ENCODE measurements at regions of chr1 and their contacts with region 1.

Region 1: GRCh38 chr1:156226116-156226538 is 13.3 kb downstream of the PMF1 start:
- DNase-seq: no peak
- ATAC-seq: no peak
- H3K4me3 Mint-ChIP-seq: no peak overlapping the region
- H3K27ac Mint-ChIP-seq: peak overlapping the region; percentile 85
- H3K4me1 Mint-ChIP-seq: peaks cover 47% of the 10 kb centered on the region
- H3K27me3 Mint-ChIP-seq: no peaks in the 10 kb centered on the region

Region 2: GRCh38 chr1:156096640-156097391 is 129.3 kb before region 1 on chr1:
- CTCF ChIA-PET with region 1: interaction called, 40 read pairs
- POLR2A ChIA-PET with region 1: interaction called, 30 read pairs
- intact Hi-C with region 1: loop called (anchors 1 to 2 kb)
- DNase-seq: peak; percentile 96
- ATAC-seq: peak; percentile 76
- H3K4me3 Mint-ChIP-seq: peak overlapping the region; percentile 60
- H3K27ac Mint-ChIP-seq: peak overlapping the region; percentile 94
- H3K4me1 Mint-ChIP-seq: peaks cover 58% of the 10 kb centered on the region
- H3K27me3 Mint-ChIP-seq: peaks cover 7% of the 10 kb centered on the region

Region 3: GRCh38 chr1:156129706-156130581 is 96.2 kb before region 1 on chr1:
- CTCF ChIA-PET with region 1: interaction called, 47 read pairs
- POLR2A ChIA-PET with region 1: interaction called, 3 read pairs
- intact Hi-C with region 1: loop called in 1 of 2 experiments (anchors 1 kb)
- DNase-seq: peak; percentile 89
- ATAC-seq: peak; percentile 27
- H3K4me3 Mint-ChIP-seq: no peak overlapping the region
- H3K27ac Mint-ChIP-seq: peak overlapping the region; percentile 49
- H3K4me1 Mint-ChIP-seq: peaks cover 54% of the 10 kb centered on the region
- H3K27me3 Mint-ChIP-seq: no peaks in the 10 kb centered on the region

Region 4: GRCh38 chr1:156146020-156146768 is 79.9 kb before region 1 on chr1:
- CTCF ChIA-PET with region 1: interaction called, 229 read pairs
- POLR2A ChIA-PET with region 1: interaction called, 6 read pairs
- intact Hi-C with region 1: loop called (anchors 1 kb)
- DNase-seq: peak; percentile 67
- ATAC-seq: peak; percentile 82
- H3K4me3 Mint-ChIP-seq: peak overlapping the region; percentile 37
- H3K27ac Mint-ChIP-seq: peak overlapping the region; percentile 85
- H3K4me1 Mint-ChIP-seq: peaks cover 46% of the 10 kb centered on the region
- H3K27me3 Mint-ChIP-seq: no peaks in the 10 kb centered on the region

Region 5: DNA sequence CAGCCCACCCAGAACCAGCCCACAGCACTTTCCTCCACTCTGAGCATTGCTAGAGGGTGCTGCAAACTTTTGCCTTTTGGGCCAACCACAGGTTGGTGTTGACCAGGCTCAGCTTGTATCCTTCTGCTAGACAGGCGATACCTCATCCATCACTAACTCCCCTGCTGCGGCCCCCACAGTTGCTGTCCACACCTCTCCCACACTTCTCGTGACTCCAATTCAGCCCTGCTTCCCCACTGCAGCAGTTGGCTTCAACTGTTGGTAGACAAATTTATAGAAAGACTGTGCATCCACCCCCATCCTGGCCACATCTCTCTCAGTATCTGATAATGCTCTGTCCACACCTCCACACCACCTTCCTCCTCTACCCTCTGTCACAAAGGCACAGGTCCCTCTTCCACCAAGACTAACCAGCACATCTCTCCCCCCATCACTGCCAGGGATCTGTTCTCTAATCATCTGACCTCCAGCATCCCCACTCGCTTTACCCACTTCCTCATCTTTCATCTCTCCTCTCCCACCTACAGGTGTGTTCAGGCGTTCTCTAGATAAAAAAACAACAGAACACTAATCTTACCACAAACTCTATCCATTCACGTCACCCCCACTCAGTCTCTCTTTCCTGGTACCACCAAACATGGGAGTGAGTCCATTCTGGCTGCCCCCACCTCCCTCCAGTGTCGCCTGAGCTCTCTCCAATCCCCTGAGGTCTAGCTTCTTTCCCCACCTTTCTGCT is 48.0 kb before region 1 on chr1:
- CTCF ChIA-PET with region 1: interaction called, 6 read pairs
- POLR2A ChIA-PET with region 1: no interaction called
- intact Hi-C with region 1: loop called in 1 of 2 experiments (anchors 1 kb)
- DNase-seq: peak; percentile 39
- ATAC-seq: peak; percentile 76
- H3K4me3 Mint-ChIP-seq: peak overlapping the region; percentile 11
- H3K27ac Mint-ChIP-seq: peak overlapping the region; percentile 75
- H3K4me1 Mint-ChIP-seq: peaks cover 29% of the 10 kb centered on the region
- H3K27me3 Mint-ChIP-seq: no peaks in the 10 kb centered on the region

Region 6: DNA sequence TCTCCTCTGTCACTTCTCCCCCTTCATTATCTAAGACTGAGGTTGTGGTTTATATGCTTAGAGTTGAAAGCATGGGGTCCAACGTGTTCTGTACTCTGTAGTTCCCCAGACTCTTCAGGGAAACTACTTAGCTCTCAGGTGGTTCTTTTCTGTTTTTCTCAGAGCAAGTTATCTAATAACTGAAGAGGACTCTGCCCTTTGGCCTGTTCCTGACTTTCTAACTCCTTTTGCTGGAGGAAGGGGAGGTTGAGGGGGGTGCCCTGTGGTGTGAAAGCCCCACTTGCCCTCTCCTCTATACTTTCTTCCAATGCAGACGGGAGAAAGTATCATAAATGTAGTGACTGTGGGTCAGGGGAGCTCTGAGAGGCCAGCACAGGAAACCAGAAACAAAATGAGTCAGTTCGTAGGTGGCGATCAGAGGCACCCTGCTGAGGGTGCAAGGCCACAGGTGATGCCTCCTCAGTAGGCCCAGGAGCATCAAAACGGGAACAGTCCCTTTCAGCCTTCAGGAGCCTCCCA is 27.2 kb before region 1 on chr1:
- CTCF ChIA-PET with region 1: interaction called, 9 read pairs
- POLR2A ChIA-PET with region 1: interaction called, 4 read pairs
- intact Hi-C with region 1: loop called (anchors 1 to 2 kb)
- DNase-seq: peak; percentile 65
- ATAC-seq: peak; percentile 80
- H3K4me3 Mint-ChIP-seq: no peak overlapping the region
- H3K27ac Mint-ChIP-seq: no peak overlapping the region
- H3K4me1 Mint-ChIP-seq: peaks cover 26% of the 10 kb centered on the region
- H3K27me3 Mint-ChIP-seq: no peaks in the 10 kb centered on the region

Region 7: DNA sequence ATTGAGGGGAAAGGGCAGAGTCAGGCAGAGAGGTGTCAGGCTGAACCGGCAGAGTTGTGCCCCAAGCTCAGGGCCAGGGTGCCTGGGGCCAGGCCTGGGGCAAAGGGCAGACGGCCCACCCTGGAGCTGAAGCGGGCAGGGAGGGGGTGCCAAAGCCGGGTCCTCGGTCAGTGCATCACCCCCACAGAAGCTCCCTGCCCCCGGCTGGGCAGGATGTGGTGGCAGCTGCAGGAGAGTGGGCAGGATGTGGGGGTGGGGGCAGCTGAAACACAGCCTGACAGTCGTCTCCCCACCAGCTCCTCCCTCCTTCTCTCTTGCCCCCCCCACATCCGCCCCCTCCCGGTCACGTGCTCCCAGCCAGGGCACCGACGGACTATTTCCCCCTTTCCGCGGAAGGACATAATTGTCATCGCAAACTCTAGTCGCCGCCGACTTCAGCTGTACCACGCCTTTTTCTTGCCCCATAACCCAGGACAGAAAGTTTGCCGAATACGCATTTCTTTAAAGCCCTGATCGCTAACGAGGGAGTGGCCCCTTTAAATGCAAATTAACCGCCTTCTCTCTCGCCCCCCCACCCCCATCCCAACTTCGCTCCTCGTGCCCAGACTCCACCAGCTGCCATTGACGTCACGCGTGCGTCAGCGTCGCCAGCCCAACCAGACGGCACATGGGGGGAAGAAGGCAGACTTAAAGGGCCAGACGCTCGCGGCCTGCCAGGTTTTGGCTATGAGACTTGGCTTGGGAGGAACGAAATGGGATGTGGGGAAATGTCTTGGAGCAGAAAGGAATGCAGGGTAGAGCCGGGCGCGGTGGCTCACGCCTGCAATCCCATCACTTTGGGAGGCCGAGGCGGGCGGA is 278.9 kb after region 1 on chr1:
- CTCF ChIA-PET with region 1: no interaction called
- POLR2A ChIA-PET with region 1: no interaction called
- intact Hi-C with region 1: no loop called
- DNase-seq: peak; percentile 99
- ATAC-seq: peak; percentile 42
- H3K4me3 Mint-ChIP-seq: peak overlapping the region; percentile 64
- H3K27ac Mint-ChIP-seq: peak overlapping the region; percentile 99
- H3K4me1 Mint-ChIP-seq: peaks cover 67% of the 10 kb centered on the region
- H3K27me3 Mint-ChIP-seq: no peaks in the 10 kb centered on the region

Region 8: DNA sequence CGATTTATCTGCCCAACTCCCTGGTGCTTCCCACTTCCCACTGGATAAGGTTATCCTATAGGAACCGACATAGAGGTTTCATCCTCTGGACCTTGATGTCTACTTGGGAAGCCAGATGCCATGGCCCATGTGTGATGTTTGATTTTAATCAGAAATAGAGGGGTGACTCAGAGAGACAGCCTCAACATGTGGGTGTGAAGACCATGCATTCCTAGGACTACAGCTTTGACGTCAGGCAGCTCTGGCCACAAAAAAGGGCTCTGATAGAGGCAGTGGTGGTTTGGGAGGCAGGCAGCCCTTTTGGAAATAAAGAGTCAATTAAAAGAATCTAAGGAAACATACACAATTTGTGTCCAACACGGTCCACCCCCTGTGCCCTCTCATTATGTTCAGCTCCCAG is 595.7 kb after region 1 on chr1:
- CTCF ChIA-PET with region 1: no interaction called
- POLR2A ChIA-PET with region 1: no interaction called
- intact Hi-C with region 1: no loop called
- DNase-seq: peak; percentile 75
- ATAC-seq: peak; percentile 86
- H3K4me3 Mint-ChIP-seq: no peak overlapping the region
- H3K27ac Mint-ChIP-seq: peak overlapping the region; percentile 70
- H3K4me1 Mint-ChIP-seq: peaks cover 36% of the 10 kb centered on the region
- H3K27me3 Mint-ChIP-seq: no peaks in the 10 kb centered on the region